ENCODE measurements at regions of chr17 and their contacts with region 1.

Region 1: DNA sequence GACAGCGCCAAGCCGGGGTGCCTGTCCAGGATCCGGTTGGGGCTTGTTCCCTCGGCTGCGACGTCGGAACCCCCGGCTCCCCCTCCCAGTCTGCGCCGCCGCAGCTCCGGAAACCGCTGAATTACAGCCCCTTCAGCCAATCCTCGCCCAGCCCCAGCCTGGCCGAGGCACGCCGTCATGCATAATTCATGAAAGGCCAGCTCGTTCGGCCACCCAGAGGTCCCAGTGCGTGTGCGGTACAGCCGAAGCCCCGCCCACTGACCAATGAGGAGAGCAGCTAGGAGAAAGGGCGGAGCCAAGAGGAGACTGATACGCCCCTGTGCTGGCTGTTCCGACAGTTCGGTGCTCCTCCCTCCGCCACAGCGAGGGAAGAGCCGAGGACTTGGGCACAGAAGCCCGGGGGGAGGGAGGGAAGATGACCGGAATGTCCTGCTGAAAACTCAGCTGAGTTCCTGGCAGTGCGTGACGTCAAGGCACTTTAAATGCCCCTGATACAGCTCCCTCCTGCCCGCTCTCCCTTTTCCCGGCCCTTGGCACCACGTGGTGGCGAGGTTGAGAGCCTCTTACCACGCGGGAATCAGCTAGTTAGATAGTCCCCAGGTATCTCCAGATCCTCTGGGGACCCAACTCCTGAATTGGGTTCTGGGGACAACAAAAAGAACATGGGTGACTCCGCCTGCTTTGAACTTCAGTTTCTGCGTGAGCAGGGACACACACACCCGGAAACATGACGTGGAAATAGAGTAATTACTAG is at the start of gene STAT3:
- DNase-seq: peak; percentile 100
- H3K4me3 ChIP-seq: peak within 1 kb of the TSS; percentile 88 to 97 (median 93)
- H3K4me3 Mint-ChIP-seq: peak within 1 kb of the TSS; percentile 98
- H3K27ac ChIP-seq: peak within 1 kb of the TSS; percentile 98 to 100
- H3K27ac Mint-ChIP-seq: peak within 1 kb of the TSS; percentile 100
- H3K4me1 ChIP-seq: peaks cover 14 to 26% of the 10 kb centered on the region in 2 donors
- H3K4me1 Mint-ChIP-seq: peaks cover 35% of the 10 kb centered on the region
- H3K27me3 ChIP-seq: no peaks in the 10 kb centered on the region
- H3K27me3 Mint-ChIP-seq: peaks cover 0 to 2% (median 2%) of the 10 kb centered on the region in 3 donors
- CTCF ChIP-seq: no peak
- polyA plus RNA-seq, gene STAT3: 73.0 to 155 (median 110) TPM

Region 2: GRCh38 chr17:42337442-42337841 is 51.1 kb before region 1 on chr17:
- intact Hi-C with region 1: loop called in 1 of 2 experiments (anchors 5 kb)
- DNase-seq: peak; percentile 19 to 62 (median 60)
- H3K4me3 ChIP-seq: no peak overlapping the region
- H3K4me3 Mint-ChIP-seq: peak overlapping the region in 1 of 2 donors; percentile 24
- H3K27ac ChIP-seq: peak overlapping the region; percentile 8 to 65
- H3K27ac Mint-ChIP-seq: peak overlapping the region in 6 of 7 donors; percentile 11 to 85 (median 66)
- H3K4me1 ChIP-seq: peaks cover 12 to 18% of the 10 kb centered on the region in 2 donors
- H3K4me1 Mint-ChIP-seq: peaks cover 23% of the 10 kb centered on the region
- H3K27me3 ChIP-seq: no peaks in the 10 kb centered on the region
- H3K27me3 Mint-ChIP-seq: peaks cover 0 to 1% (median 0%) of the 10 kb centered on the region in 3 donors
- CTCF ChIP-seq: no peak

Region 3: DNA sequence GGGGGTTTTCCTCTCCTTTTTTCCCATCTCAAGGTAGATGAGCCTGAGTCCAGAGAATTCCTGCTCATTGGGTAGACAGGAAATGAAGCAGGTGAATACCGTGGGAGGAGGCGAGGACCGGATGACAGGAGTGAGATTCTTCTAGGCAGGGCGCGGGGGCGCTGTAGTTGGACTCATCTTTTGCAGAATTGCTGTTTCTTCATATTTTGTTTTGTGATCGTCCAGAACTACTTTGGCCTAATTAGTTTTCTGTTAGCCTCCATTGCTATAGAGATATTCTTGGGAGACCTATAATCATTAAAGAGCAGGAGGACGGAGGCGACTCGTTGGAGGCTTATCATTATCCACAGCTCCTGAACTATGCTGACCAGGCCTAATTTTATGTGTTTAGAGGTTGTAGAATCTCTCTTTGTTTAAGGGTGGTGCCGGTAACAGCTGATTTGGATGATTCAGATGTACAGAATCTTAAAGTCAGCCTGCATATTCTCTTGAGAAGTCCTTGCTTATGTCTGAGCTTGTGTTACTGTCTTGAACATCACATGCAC is 70.8 kb after region 1 on chr17:
- intact Hi-C with region 1: loop called in 1 of 2 experiments (anchors 5 kb)
- DNase-seq: peak in 1 of 3 donors; percentile 15
- H3K4me3 ChIP-seq: peak overlapping the region; percentile 80 to 96 (median 87)
- H3K4me3 Mint-ChIP-seq: peak overlapping the region; percentile 97 to 98
- H3K27ac ChIP-seq: peak overlapping the region; percentile 82 to 84
- H3K27ac Mint-ChIP-seq: peak overlapping the region; percentile 91 to 99 (median 97)
- H3K4me1 ChIP-seq: peaks cover 58 to 63% of the 10 kb centered on the region in 2 donors
- H3K4me1 Mint-ChIP-seq: peaks cover 60% of the 10 kb centered on the region
- H3K27me3 ChIP-seq: no peaks in the 10 kb centered on the region
- H3K27me3 Mint-ChIP-seq: peaks cover 0 to 2% (median 0%) of the 10 kb centered on the region in 3 donors
- CTCF ChIP-seq: peak; percentile 35

Region 4: DNA sequence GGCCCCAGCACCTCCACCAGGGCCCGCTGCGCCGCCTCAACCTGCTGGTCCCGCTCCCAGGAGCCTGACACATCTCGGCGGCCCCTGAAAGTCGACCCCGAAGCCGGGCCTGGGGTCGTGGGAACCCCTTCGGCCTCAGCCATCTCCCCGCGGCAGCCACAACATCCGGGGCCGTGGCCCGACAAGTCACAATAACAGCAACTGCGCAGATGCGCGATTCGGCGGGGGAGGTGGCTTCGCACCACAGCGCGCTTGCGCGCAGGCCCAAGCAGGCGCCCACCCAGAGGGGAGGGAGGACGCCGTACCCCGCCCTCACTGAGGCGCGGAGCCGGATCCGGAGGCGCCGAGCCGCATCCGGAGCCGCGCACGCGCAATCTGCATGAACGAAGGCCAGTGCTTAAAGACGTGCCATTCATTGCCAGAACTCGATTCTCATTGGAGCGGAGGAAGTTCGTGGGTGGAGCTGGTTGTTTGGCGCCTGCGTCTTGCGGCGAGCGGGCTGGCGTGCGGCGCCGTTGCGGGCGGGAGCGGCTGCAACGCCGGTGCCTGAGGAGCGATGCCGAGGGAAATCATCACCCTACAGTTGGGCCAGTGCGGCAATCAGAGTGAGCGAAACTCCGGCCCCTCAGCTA is 220.7 kb after region 1 on chr17 and contains the starts of genes RETREG3 and TUBG1:
- intact Hi-C with region 1: no loop called
- DNase-seq: peak; percentile 99 to 100 (median 99)
- H3K4me3 ChIP-seq: peak within 1 kb of the TSS; percentile 80 to 98 (median 92)
- H3K4me3 Mint-ChIP-seq: peak within 1 kb of the TSS; percentile 100
- H3K27ac ChIP-seq: peak within 1 kb of the TSS; percentile 72 to 90
- H3K27ac Mint-ChIP-seq: peak within 1 kb of the TSS; percentile 84 to 96 (median 95)
- H3K4me1 ChIP-seq: peaks cover 21 to 32% of the 10 kb centered on the region in 2 donors
- H3K4me1 Mint-ChIP-seq: peaks cover 31% of the 10 kb centered on the region
- H3K27me3 ChIP-seq: no peaks in the 10 kb centered on the region
- H3K27me3 Mint-ChIP-seq: peaks cover 0 to 3% (median 0%) of the 10 kb centered on the region in 3 donors
- CTCF ChIP-seq: peak; percentile 20
- polyA plus RNA-seq, gene RETREG3: 34.0 to 69.9 (median 69.9) TPM
- polyA plus RNA-seq, gene TUBG1: 7.5 to 17.4 (median 10.2) TPM

Measured in CD14-positive monocyte (primary cell).